Activated CD8-positive, alpha-beta memory T cell treated with anti-CD3 and anti-CD28 coated beads, Interleukin-2, amount 10 ng/mL, durations not matched to agents 7 days and 5 days (primary cell): ENCODE measurements at regions of chr12 and their contacts with region 1.

Region 1: GRCh38 chr12:48890657-48891418 is 25.2 kb upstream of the RND1 start:
- DNase-seq: peak; percentile 81
- ATAC-seq: peak; percentile 100
- H3K4me3 Mint-ChIP-seq: peak overlapping the region; percentile 7
- H3K27ac Mint-ChIP-seq: no peak overlapping the region
- H3K4me1 Mint-ChIP-seq: peaks cover 10% of the 10 kb centered on the region
- H3K27me3 Mint-ChIP-seq: peaks cover 17% of the 10 kb centered on the region

Region 2: GRCh38 chr12:48865434-48866290 is 25.2 kb before region 1 on chr12 and contains the start of gene RND1:
- CTCF ChIA-PET with region 1: interaction called, 42 read pairs
- DNase-seq: peak; percentile 90
- ATAC-seq: peak; percentile 97
- H3K4me3 Mint-ChIP-seq: peak within 1 kb of the TSS; percentile 83
- H3K27ac Mint-ChIP-seq: peak within 1 kb of the TSS; percentile 79
- H3K4me1 Mint-ChIP-seq: peaks cover 26% of the 10 kb centered on the region
- H3K27me3 Mint-ChIP-seq: peaks cover 24% of the 10 kb centered on the region
- total RNA-seq, gene RND1: 2.7 to 4.2 TPM

Region 3: GRCh38 chr12:48924617-48925303 is 33.9 kb after region 1 on chr12:
- CTCF ChIA-PET with region 1: interaction called, 11 read pairs
- DNase-seq: peak; percentile 83
- ATAC-seq: peak; percentile 74
- H3K4me3 Mint-ChIP-seq: peak overlapping the region; percentile 92
- H3K27ac Mint-ChIP-seq: peak overlapping the region; percentile 95
- H3K4me1 Mint-ChIP-seq: peaks cover 43% of the 10 kb centered on the region
- H3K27me3 Mint-ChIP-seq: no peaks in the 10 kb centered on the region

Region 4: GRCh38 chr12:48957141-48958048 is 66.6 kb after region 1 on chr12 and contains the start of gene ARF3:
- CTCF ChIA-PET with region 1: interaction called, 18 read pairs
- DNase-seq: peak; percentile 95
- ATAC-seq: peak; percentile 97
- H3K4me3 Mint-ChIP-seq: peak within 1 kb of the TSS; percentile 94
- H3K27ac Mint-ChIP-seq: peak within 1 kb of the TSS; percentile 82
- H3K4me1 Mint-ChIP-seq: peaks cover 26% of the 10 kb centered on the region
- H3K27me3 Mint-ChIP-seq: peaks cover 20% of the 10 kb centered on the region
- total RNA-seq, gene ARF3: 89.4 to 118 TPM